ENCODE measurements at regions of chr1 and their contacts with region 1.

Region 1: DNA sequence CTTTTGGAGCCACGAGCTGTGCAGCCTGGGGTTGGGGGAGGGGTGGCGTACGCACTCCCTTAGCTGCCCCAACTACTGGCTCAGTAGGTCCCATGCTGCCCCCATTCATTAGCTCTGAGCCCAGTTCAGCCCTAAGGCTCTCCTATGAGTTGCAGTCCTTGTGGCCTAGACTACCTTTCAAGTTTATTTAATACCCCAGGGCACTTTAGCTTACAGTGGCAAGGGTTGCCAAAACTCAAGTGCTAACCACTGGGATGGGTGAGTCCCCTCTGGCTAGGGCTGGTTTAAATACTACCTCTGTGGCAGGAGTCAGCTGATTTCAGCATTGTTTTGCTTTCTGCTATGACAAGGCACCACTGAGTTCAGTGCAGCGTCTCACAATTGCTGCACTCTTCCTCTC is 118.2 kb downstream of the ODF2L start:
- DNase-seq: no peak
- H3K4me3 ChIP-seq: no peak overlapping the region
- H3K27ac ChIP-seq: no peak overlapping the region
- H3K4me1 ChIP-seq: no peaks in the 10 kb centered on the region
- H3K27me3 ChIP-seq: no peaks in the 10 kb centered on the region
- CTCF ChIP-seq: no peak
- POLR2A ChIP-seq: no peak

Region 2: GRCh38 chr1:86146603-86147002 is 131.3 kb before region 1 on chr1:
- intact Hi-C with region 1: no loop called
- DNase-seq: no peak
- H3K4me3 ChIP-seq: no peak overlapping the region
- H3K27ac ChIP-seq: no peak overlapping the region
- H3K4me1 ChIP-seq: no peaks in the 10 kb centered on the region
- H3K27me3 ChIP-seq: no peaks in the 10 kb centered on the region
- CTCF ChIP-seq: no peak
- POLR2A ChIP-seq: no peak

Region 3: GRCh38 chr1:86218859-86219258 is 59.1 kb before region 1 on chr1:
- intact Hi-C with region 1: no loop called
- DNase-seq: no peak
- H3K4me3 ChIP-seq: no peak overlapping the region
- H3K27ac ChIP-seq: no peak overlapping the region
- H3K4me1 ChIP-seq: no peaks in the 10 kb centered on the region
- H3K27me3 ChIP-seq: no peaks in the 10 kb centered on the region
- CTCF ChIP-seq: no peak
- POLR2A ChIP-seq: no peak

Region 4: GRCh38 chr1:86263101-86263500 is 14.8 kb before region 1 on chr1:
- intact Hi-C with region 1: loop called (anchors 1 kb)
- DNase-seq: no peak
- H3K4me3 ChIP-seq: no peak overlapping the region
- H3K27ac ChIP-seq: no peak overlapping the region
- H3K4me1 ChIP-seq: no peaks in the 10 kb centered on the region
- H3K27me3 ChIP-seq: no peaks in the 10 kb centered on the region
- CTCF ChIP-seq: no peak
- POLR2A ChIP-seq: no peak

Measured in breast epithelium (tissue), 4 donors.